GM12878 (cell line): ENCODE measurements at regions of chr12 and their contacts with region 1.

Region 1: GRCh38 chr12:93677195-93678064 is at the start of gene CRADD:
- DNase-seq: peak; percentile 99
- ATAC-seq: peak; percentile 95
- H3K4me3 ChIP-seq: peak within 1 kb of the TSS; percentile 73
- H3K27ac ChIP-seq: peak within 1 kb of the TSS; percentile 86
- H3K4me1 ChIP-seq: peaks cover 10% of the 10 kb centered on the region
- H3K27me3 ChIP-seq: no peaks in the 10 kb centered on the region
- CTCF ChIP-seq: no peak
- EP300 ChIP-seq: no peak
- POLR2A ChIP-seq: peak; percentile 90
- RAD21 ChIP-seq: no peak
- polyA plus RNA-seq, gene CRADD: 7.6 to 8.8 TPM

Region 2: GRCh38 chr12:93591137-93591868 is 86.1 kb before region 1 on chr12:
- CTCF ChIA-PET with region 1: no interaction called
- POLR2A ChIA-PET with region 1: no interaction called
- RAD21 ChIA-PET with region 1: interaction called, 3 read pairs
- SMC1A ChIA-PET with region 1: no interaction called
- in situ Hi-C with region 1: no loop called
- intact Hi-C with region 1: loop called (anchors 5 kb)
- DNase-seq: no peak
- ATAC-seq: peak; percentile 95
- H3K4me3 ChIP-seq: peak overlapping the region; percentile 68
- H3K27ac ChIP-seq: no peak overlapping the region
- H3K4me1 ChIP-seq: peaks cover 5% of the 10 kb centered on the region; the same call in 1 of the 2 replicates
- H3K27me3 ChIP-seq: no peaks in the 10 kb centered on the region; a peak in 1 of 4 replicates
- CTCF ChIP-seq: no peak
- EP300 ChIP-seq: no peak
- POLR2A ChIP-seq: no peak
- RAD21 ChIP-seq: no peak

Region 3: GRCh38 chr12:93847517-93848474 is 170.4 kb after region 1 on chr12:
- CTCF ChIA-PET with region 1: no interaction called
- POLR2A ChIA-PET with region 1: no interaction called
- RAD21 ChIA-PET with region 1: no interaction called
- SMC1A ChIA-PET with region 1: no interaction called
- in situ Hi-C with region 1: no loop called
- intact Hi-C with region 1: loop called (anchors 5 kb)
- DNase-seq: peak; percentile 82
- ATAC-seq: peak; percentile 93
- H3K4me3 ChIP-seq: no peak overlapping the region
- H3K27ac ChIP-seq: 0 out of 2 replicates have a peak overlapping the region, but pooled peaks have one; percentile 17
- H3K4me1 ChIP-seq: peaks cover 21% of the 10 kb centered on the region
- H3K27me3 ChIP-seq: no peaks in the 10 kb centered on the region
- CTCF ChIP-seq: no peak
- EP300 ChIP-seq: peak; percentile 98
- POLR2A ChIP-seq: no peak
- RAD21 ChIP-seq: peak; percentile 16; the same call in 1 of the 2 replicates

Region 4: DNA sequence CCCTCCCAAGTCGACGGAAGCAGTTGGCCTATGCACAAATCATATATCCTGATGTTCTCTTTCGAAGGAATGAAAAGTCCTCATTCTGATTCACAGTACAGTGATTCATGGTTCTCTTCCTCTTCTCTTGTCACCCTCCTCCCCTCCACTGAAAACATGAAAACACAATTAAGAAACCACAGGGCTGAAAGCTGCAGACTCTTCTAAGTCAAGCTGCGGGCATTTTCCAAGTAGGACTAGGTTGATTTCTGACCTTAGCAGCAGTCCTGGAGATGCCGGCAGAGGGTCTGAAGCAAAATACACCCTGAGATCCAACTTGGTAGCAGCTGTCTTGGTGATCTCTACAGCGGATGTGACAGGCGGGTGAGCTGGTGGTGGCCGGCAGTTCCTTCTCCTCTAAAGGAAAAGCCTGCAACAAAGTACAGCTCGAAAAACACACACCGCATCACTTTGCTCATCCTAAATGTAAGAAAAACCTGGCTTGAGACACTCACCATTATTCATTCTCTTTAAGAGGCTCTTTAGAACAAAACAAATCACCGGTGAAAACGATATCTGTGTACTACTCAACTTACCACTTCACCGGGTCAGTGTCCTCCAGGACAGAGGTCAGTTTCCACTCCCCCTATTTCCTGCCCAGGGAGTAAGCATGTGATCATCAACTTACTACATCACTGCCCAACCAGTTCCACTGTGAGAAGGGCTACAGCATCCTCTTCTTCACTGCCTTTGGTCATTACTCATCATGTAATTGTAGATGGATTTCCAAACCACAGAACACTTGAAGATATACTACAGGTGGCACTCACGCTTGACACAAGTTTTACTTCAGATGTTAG is 966.9 kb after region 1 on chr12:
- CTCF ChIA-PET with region 1: no interaction called
- POLR2A ChIA-PET with region 1: no interaction called
- RAD21 ChIA-PET with region 1: no interaction called
- SMC1A ChIA-PET with region 1: no interaction called
- in situ Hi-C with region 1: no loop called
- intact Hi-C with region 1: no loop called
- DNase-seq: peak; percentile 49
- ATAC-seq: peak; percentile 76
- H3K4me3 ChIP-seq: no peak overlapping the region
- H3K27ac ChIP-seq: peak overlapping the region; percentile 9; the same call in 1 of the 2 replicates
- H3K4me1 ChIP-seq: peaks cover 30% of the 10 kb centered on the region
- H3K27me3 ChIP-seq: no peaks in the 10 kb centered on the region
- CTCF ChIP-seq: no peak
- EP300 ChIP-seq: no peak
- POLR2A ChIP-seq: no peak
- RAD21 ChIP-seq: no peak

Region 5: DNA sequence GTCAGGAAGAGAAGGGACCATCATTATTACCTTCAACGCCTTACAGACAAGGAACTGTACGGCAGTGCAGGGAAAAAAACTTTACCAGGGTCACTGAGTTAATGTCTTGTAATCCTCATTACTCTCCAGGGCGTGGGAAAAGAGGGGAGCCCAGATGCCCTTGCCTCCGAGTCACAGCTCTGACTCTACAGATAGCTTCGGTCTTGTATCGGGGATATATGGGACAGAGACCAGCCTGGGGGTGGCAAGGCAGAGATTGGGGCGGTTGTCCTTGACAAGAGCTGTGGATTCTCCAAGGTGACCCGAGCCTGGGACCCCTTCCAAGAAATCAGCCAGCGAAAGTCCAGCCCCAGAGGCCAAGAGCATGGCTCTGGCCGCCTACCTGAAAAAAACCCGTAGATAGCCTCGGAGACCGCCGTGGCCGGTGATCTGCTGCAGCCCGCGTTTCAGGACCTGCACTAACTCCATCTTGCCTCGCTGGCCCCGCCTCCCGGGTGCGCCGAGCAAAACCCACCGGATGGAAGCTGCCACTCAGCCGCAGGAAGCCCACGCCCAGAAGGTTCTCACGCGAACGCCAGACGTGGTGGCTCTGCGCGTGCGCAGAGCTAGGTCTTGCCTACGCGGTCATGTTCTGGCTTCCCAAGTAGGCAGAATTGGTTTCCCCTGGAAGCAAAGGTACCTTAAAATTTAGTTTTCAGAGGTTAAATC is 1325.9 kb after region 1 on chr12 and contains the start of gene NDUFA12:
- CTCF ChIA-PET with region 1: no interaction called
- POLR2A ChIA-PET with region 1: no interaction called
- RAD21 ChIA-PET with region 1: no interaction called
- SMC1A ChIA-PET with region 1: no interaction called
- in situ Hi-C with region 1: no loop called
- intact Hi-C with region 1: loop called (anchors 10 kb)
- DNase-seq: peak; percentile 91
- ATAC-seq: peak; percentile 99
- H3K4me3 ChIP-seq: peak within 1 kb of the TSS; percentile 85
- H3K27ac ChIP-seq: peak within 1 kb of the TSS; percentile 63
- H3K4me1 ChIP-seq: no peaks in the 10 kb centered on the region
- H3K27me3 ChIP-seq: no peaks in the 10 kb centered on the region
- CTCF ChIP-seq: no peak
- EP300 ChIP-seq: no peak
- POLR2A ChIP-seq: peak; percentile 95
- RAD21 ChIP-seq: 0 out of 2 replicates have a peak, but pooled peaks have one; percentile 14
- polyA plus RNA-seq, gene NDUFA12: 917 to 1,021 TPM